CD14-positive monocyte (primary cell): ENCODE measurements at regions of chr1 and their contacts with region 1.

Region 1: DNA sequence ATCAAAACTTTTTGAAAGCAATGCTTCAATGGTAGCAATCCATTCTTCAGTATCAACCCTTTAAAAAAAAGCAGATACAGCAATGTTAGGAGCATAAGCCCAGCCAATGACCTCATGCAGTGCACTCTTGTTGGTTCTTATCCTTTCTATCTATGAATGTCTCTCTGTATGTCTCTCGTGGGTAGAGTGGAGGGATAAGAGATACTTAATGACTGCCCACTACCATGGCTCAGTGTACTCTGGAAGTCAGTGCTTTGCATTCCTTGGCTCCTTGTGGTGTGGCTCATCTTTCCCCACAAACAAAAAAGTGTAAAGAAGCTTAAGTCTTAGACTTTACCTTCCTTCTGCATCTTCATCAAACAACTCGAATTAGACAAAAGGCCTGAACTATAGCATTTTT is 50.3 kb downstream of the PCSK9 start:
- DNase-seq: no peak
- H3K4me3 ChIP-seq: no peak overlapping the region
- H3K4me3 Mint-ChIP-seq: no peak overlapping the region
- H3K27ac ChIP-seq: no peak overlapping the region
- H3K27ac Mint-ChIP-seq: peak overlapping the region in 1 of 7 donors; percentile 50
- H3K4me1 ChIP-seq: no peaks in the 10 kb centered on the region
- H3K4me1 Mint-ChIP-seq: no peaks in the 10 kb centered on the region
- H3K27me3 ChIP-seq: no peaks in the 10 kb centered on the region
- H3K27me3 Mint-ChIP-seq: no peaks in the 10 kb centered on the region
- CTCF ChIP-seq: no peak

Region 2: GRCh38 chr1:55053265-55053954 is 36.3 kb before region 1 on chr1:
- intact Hi-C with region 1: loop called in 1 of 2 experiments (anchors 1 kb)
- DNase-seq: peak; percentile 6 to 13 (median 9)
- H3K4me3 ChIP-seq: no peak overlapping the region
- H3K4me3 Mint-ChIP-seq: no peak overlapping the region
- H3K27ac ChIP-seq: peak overlapping the region in 1 of 2 donors; percentile 8
- H3K27ac Mint-ChIP-seq: peak overlapping the region in 4 of 7 donors; percentile 13 to 58 (median 44)
- H3K4me1 ChIP-seq: peaks cover 12 to 13% of the 10 kb centered on the region in 2 donors
- H3K4me1 Mint-ChIP-seq: peaks cover 14% of the 10 kb centered on the region
- H3K27me3 ChIP-seq: no peaks in the 10 kb centered on the region
- H3K27me3 Mint-ChIP-seq: peaks cover 4 to 8% (median 7%) of the 10 kb centered on the region in 3 donors
- CTCF ChIP-seq: no peak